ENCODE measurements at regions of chr20 and their contacts with region 1.

Region 1: GRCh38 chr20:46307139-46307998 is 929 bp downstream of the CDH22 start:
- DNase-seq: peak; percentile 45
- H3K4me3 Mint-ChIP-seq: peak overlapping the region; percentile 31
- H3K27ac Mint-ChIP-seq: no peak overlapping the region
- H3K4me1 Mint-ChIP-seq: peaks cover 7% of the 10 kb centered on the region
- H3K27me3 Mint-ChIP-seq: peaks cover 71% of the 10 kb centered on the region

Region 2: GRCh38 chr20:46022411-46023147 is 284.8 kb before region 1 on chr20:
- intact Hi-C with region 1: loop called (anchors 10 kb)
- DNase-seq: peak; percentile 64
- H3K4me3 Mint-ChIP-seq: peak overlapping the region; percentile 78
- H3K27ac Mint-ChIP-seq: no peak overlapping the region
- H3K4me1 Mint-ChIP-seq: peaks cover 23% of the 10 kb centered on the region
- H3K27me3 Mint-ChIP-seq: peaks cover 47% of the 10 kb centered on the region

Region 3: DNA sequence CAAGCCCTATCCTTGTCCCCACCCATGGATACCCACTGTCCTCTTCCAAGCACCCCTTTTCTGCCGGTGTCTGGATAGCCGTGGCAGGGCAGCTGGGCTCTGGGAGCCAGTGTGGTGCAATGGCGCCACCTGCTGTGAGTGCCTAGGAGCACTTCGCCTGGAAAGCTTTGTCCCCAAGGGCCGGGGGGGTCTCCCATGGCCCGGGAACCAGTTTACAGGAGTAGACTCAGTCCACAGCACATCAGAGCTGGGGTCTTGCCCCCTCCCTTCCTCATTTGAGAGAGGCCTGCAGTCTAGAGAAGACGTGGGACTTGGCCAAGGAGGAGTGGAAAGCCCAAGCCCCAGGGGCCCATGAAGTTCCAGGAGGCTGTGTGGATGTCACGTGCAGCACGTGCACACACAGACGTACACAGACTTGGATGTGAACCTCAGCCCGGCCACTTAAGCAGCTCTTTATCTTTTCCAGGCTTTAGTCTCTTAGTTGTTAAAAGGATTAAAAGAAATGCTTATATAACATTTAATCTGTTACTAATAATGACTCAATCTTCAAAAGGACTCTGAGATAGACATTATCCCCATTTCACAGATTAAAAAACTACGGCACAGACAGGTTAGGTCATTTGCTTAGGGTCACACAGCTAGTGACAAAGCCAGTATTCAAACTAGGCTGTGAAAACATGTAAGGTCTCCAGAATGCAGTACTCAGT is 41.8 kb after region 1 on chr20:
- intact Hi-C with region 1: loop called (anchors 1 kb)
- DNase-seq: peak; percentile 22
- H3K4me3 Mint-ChIP-seq: no peak overlapping the region
- H3K27ac Mint-ChIP-seq: no peak overlapping the region
- H3K4me1 Mint-ChIP-seq: peaks cover 9% of the 10 kb centered on the region
- H3K27me3 Mint-ChIP-seq: no peaks in the 10 kb centered on the region

Region 4: DNA sequence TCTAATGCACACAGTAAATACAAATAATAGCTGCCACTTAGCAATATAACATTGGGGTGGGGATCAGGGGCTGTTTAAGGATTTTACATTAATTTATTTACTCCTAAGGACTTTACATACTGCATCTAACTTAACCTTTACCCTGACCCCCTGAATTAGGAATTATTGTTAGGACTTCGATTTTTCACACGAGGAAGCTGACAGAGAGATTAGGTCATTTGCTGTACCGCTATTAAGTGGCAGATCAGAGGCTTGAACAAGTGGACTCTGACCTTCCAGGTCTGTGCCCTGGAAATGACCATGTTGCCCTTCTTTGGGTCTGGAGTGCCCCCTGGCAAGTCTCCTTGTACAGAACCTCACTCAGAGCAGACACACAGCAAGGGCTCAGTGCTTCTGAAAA is 104.3 kb after region 1 on chr20:
- intact Hi-C with region 1: loop called (anchors 1 kb)
- DNase-seq: no peak
- H3K4me3 Mint-ChIP-seq: no peak overlapping the region
- H3K27ac Mint-ChIP-seq: no peak overlapping the region
- H3K4me1 Mint-ChIP-seq: peaks cover 29% of the 10 kb centered on the region
- H3K27me3 Mint-ChIP-seq: peaks cover 24% of the 10 kb centered on the region

Region 5: DNA sequence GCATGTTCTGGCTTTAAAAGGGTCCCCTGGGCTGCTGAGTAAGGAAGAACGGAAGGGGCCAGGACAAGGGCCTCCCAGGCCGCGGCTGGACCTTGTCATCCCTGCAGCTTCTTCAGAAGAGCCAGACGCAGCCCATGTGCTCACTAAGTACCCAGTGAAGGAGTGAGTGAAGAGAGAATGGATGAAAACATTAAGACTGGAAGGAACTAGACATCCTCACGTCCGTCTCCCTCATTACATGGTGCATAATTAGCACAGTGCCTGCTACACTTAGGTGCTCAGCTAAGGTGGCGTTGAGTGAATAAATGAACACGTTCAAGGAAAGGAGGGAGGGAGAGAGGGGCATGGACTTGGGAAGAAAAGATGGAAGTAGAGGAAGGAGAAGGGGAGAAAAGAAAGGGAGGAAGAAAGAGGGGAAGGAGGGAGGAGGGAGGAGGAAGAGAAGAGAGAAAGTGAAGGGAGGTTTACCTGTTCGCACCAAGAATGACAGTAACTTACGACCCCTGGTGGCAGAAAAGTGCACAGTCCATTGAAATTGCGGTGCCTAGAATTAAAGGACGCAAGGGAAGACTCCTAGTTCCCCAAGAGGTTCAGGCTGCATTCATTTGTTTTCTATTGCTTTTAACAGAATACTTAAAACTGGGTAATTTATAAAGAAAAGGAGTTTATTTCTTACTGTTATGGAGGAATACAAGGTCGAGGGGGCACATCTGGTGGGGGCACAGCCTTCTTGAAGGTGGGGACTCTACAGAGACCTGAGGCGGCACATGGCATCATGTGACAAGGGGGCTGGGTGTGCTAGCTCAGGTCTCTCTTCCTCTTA is 373.9 kb after region 1 on chr20:
- intact Hi-C with region 1: loop called (anchors 1 kb)
- DNase-seq: peak; percentile 57
- H3K4me3 Mint-ChIP-seq: no peak overlapping the region
- H3K27ac Mint-ChIP-seq: no peak overlapping the region
- H3K4me1 Mint-ChIP-seq: peaks cover 32% of the 10 kb centered on the region
- H3K27me3 Mint-ChIP-seq: no peaks in the 10 kb centered on the region

Measured in activated T-helper 1 cell treated with anti-CD3 and anti-CD28 coated beads, Interleukin-12 subunit alpha, Interleukin-12 subunit beta, Interleukin-2, Interleukin-4 antibody, amounts not matched to agents 30 ng/mL and 10 ng/mL and 1 ng/mL, durations not matched to agents 14 hours and 24 hours and 36 hours (primary cell).